Mammary epithelial cell (primary cell): ENCODE measurements at regions of chr15 and their contacts with region 1.

Region 1: GRCh38 chr15:65824031-65824743 is 32.1 kb upstream of the DENND4A start:
- DNase-seq: peak; percentile 59
- H3K4me3 ChIP-seq: no peak overlapping the region
- H3K27ac ChIP-seq: no peak overlapping the region
- H3K4me1 ChIP-seq: peaks cover 3% of the 10 kb centered on the region
- H3K27me3 ChIP-seq: no peaks in the 10 kb centered on the region
- CTCF ChIP-seq: peak; percentile 80 to 81

Region 2: GRCh38 chr15:65638681-65639089 is 185.5 kb before region 1 on chr15:
- CTCF ChIA-PET with region 1: no interaction called
- dilution Hi-C with region 1: no loop called
- in situ Hi-C with region 1: loop called in 1 of 2 experiments (anchors 10 kb)
- intact Hi-C with region 1: loop called (anchors 1 kb)
- DNase-seq: peak; percentile 71
- H3K4me3 ChIP-seq: no peak overlapping the region
- H3K27ac ChIP-seq: no peak overlapping the region
- H3K4me1 ChIP-seq: no peaks in the 10 kb centered on the region
- H3K27me3 ChIP-seq: no peaks in the 10 kb centered on the region
- CTCF ChIP-seq: peak; percentile 79 to 84

Region 3: DNA sequence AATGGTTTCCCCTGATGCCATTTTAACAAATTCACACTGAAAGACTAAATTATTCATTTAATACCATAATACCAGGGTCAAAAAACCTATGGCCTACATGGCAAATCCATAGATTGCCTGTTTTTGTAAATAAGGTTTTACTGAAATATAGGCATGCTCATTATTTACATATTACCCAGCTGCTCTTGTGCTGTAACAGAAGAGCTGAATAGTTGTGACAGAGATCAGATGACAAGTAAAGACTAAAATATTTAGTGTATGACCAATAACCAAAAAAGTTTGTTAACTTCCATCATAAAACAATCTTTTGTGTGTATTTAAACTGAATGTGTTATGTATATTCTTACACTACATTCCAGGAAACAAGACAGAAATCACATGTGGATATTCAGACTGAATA is 92.3 kb before region 1 on chr15:
- CTCF ChIA-PET with region 1: no interaction called
- dilution Hi-C with region 1: no loop called
- in situ Hi-C with region 1: no loop called
- intact Hi-C with region 1: loop called (anchors 2 kb)
- DNase-seq: peak; percentile 2
- H3K4me3 ChIP-seq: peak overlapping the region in 1 of 3 experiments; percentile 27
- H3K27ac ChIP-seq: peak overlapping the region; percentile 57
- H3K4me1 ChIP-seq: peaks cover 13% of the 10 kb centered on the region
- H3K27me3 ChIP-seq: no peaks in the 10 kb centered on the region
- CTCF ChIP-seq: no peak

Region 4: DNA sequence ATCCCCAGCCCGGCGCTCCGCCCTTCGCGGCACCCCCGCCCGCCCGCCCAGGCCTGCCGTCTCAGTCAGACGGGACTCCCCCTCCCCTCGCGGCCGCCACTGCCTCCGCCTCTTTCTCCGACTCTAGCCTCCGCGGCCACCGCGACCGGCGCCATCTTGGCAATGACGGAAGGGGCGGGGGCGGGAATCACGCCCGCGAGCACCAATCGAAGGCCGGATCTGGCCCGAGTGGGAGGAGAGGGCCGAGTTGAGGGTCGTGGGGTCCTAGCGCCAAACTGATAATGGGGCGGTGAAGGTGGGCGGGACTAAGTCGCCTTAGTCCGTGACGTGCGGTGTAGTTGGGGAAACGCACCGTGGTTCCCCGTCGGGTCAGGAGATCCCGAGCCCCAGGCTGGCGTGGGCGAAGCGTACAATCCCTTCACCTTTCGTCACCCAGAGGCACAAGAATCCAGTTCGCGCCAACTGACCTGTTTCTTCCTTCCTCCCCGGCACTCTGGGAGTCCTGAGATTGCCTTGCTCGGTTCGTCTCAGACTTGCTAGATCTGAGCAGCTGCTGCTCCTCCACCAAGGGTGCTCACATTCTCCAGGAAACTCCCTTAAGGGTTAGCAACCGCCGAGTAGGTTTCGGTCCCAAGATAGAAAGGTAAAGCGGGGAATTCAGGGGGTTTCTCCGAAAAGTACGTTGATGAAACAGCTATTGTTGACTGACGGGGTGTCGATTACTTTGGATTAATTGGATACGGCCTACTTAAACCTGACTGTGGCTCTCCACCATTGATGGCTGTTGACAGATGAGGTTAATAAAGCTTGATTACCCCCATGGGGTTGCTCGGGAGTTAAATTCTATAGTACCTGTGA is 31.8 kb before region 1 on chr15 and contains the start of gene DENND4A:
- CTCF ChIA-PET with region 1: interaction called, 6 read pairs
- dilution Hi-C with region 1: no loop called
- in situ Hi-C with region 1: no loop called
- intact Hi-C with region 1: loop called (anchors 2 kb)
- DNase-seq: peak; percentile 99
- H3K4me3 ChIP-seq: peak within 1 kb of the TSS; percentile 56 to 88 (median 83)
- H3K27ac ChIP-seq: peak within 1 kb of the TSS; percentile 95
- H3K4me1 ChIP-seq: peaks cover 40% of the 10 kb centered on the region
- H3K27me3 ChIP-seq: no peaks in the 10 kb centered on the region
- CTCF ChIP-seq: no peak
- total RNA-seq, gene DENND4A: 16.8 to 21.7 TPM

Region 5: DNA sequence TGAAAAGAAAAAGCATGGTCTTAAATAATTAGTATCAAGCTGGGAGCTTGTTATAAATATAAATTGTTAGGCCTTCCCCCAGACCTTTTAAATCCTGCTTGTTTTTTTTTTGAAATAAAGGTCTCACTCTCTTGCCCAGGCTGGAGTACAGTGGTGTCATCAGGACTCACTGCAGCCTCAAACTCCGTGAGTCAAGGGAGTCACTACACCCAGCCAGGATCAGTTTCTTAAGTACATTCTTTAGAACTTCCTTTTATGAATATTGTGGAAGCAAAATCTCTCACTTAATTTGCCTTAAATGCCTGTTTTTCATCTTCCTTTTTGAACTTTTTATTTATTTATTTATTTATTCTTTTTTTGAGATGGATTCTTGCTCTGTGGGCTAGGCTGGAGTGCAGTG is 11.3 kb before region 1 on chr15:
- CTCF ChIA-PET with region 1: no interaction called
- dilution Hi-C with region 1: no loop called
- in situ Hi-C with region 1: no loop called
- intact Hi-C with region 1: no loop called
- DNase-seq: no peak
- H3K4me3 ChIP-seq: no peak overlapping the region
- H3K27ac ChIP-seq: no peak overlapping the region
- H3K4me1 ChIP-seq: no peaks in the 10 kb centered on the region
- H3K27me3 ChIP-seq: no peaks in the 10 kb centered on the region
- CTCF ChIP-seq: no peak